ENCODE measurements at regions of chr4 and their contacts with region 1.

Region 1: GRCh38 chr4:185020293-185020808 is 2.1 kb downstream of the HELT start:
- DNase-seq: peak in 1 of 2 experiments; percentile 83
- H3K4me3 ChIP-seq: peak overlapping the region; percentile 2 to 53 (median 28); a peak in 7 of 8 replicates
- H3K27ac ChIP-seq: no peak overlapping the region
- H3K4me1 ChIP-seq: peaks cover 0 to 52% (median 29%) of the 10 kb centered on the region in 4 experiments; a peak in 6 of 7 replicates
- H3K27me3 ChIP-seq: peaks cover 95 to 100% (median 100%) of the 10 kb centered on the region in 4 experiments
- CTCF ChIP-seq: no peak
- EP300 ChIP-seq: no peak
- POLR2A ChIP-seq: no peak
- RAD21 ChIP-seq: no peak

Region 2: GRCh38 chr4:184942444-184943425 is 77.6 kb before region 1 on chr4:
- CTCF ChIA-PET with region 1: no interaction called
- POLR2A ChIA-PET with region 1: no interaction called
- DNase-seq: peak in 1 of 2 experiments; percentile 22
- H3K4me3 ChIP-seq: no peak overlapping the region
- H3K27ac ChIP-seq: no peak overlapping the region
- H3K4me1 ChIP-seq: no peaks in the 10 kb centered on the region
- H3K27me3 ChIP-seq: peaks cover 0 to 1% (median 0%) of the 10 kb centered on the region in 4 experiments; a peak in 1 of 7 replicates
- CTCF ChIP-seq: no peak
- EP300 ChIP-seq: no peak
- POLR2A ChIP-seq: no peak
- RAD21 ChIP-seq: no peak

Region 3: GRCh38 chr4:185005216-185005819 is 15.0 kb before region 1 on chr4:
- CTCF ChIA-PET with region 1: interaction called, 36 read pairs
- POLR2A ChIA-PET with region 1: no interaction called
- DNase-seq: peak in 1 of 2 experiments; percentile 93
- H3K4me3 ChIP-seq: peak overlapping the region; percentile 13 to 55 (median 33); a peak in 7 of 8 replicates
- H3K27ac ChIP-seq: no peak overlapping the region
- H3K4me1 ChIP-seq: peaks cover 0 to 9% (median 5%) of the 10 kb centered on the region in 4 experiments; a peak in 3 of 7 replicates
- H3K27me3 ChIP-seq: peaks cover 0 to 25% (median 18%) of the 10 kb centered on the region in 4 experiments; a peak in 6 of 7 replicates
- CTCF ChIP-seq: peak; percentile 85 to 92 (median 88)
- EP300 ChIP-seq: no peak
- POLR2A ChIP-seq: no peak
- RAD21 ChIP-seq: peak; percentile 87 to 91

Region 4: GRCh38 chr4:185054876-185055275 is 34.5 kb after region 1 on chr4:
- CTCF ChIA-PET with region 1: no interaction called
- POLR2A ChIA-PET with region 1: no interaction called
- DNase-seq: no peak
- H3K4me3 ChIP-seq: peak overlapping the region in 1 of 4 experiments; percentile 25; a peak in 2 of 8 replicates
- H3K27ac ChIP-seq: no peak overlapping the region
- H3K4me1 ChIP-seq: peaks cover 3 to 14% (median 8%) of the 10 kb centered on the region in 4 experiments; a peak in 5 of 7 replicates
- H3K27me3 ChIP-seq: no peaks in the 10 kb centered on the region
- CTCF ChIP-seq: no peak
- EP300 ChIP-seq: no peak
- POLR2A ChIP-seq: no peak
- RAD21 ChIP-seq: no peak